SK-N-SH (cell line): ENCODE measurements at regions of chr5 and their contacts with region 1.

Region 1: GRCh38 chr5:170420780-170421412 is 31.7 kb upstream of the KCNMB1 start:
- DNase-seq: peak; percentile 77
- H3K4me3 ChIP-seq: no peak overlapping the region
- H3K27ac ChIP-seq: no peak overlapping the region
- H3K4me1 ChIP-seq: peaks cover 0 to 9% of the 10 kb centered on the region in 2 experiments; a peak in 1 of 4 replicates
- H3K27me3 ChIP-seq: peaks cover 20% of the 10 kb centered on the region
- CTCF ChIP-seq: peak; percentile 84
- EP300 ChIP-seq: no peak
- RAD21 ChIP-seq: peak; percentile 79

Region 2: DNA sequence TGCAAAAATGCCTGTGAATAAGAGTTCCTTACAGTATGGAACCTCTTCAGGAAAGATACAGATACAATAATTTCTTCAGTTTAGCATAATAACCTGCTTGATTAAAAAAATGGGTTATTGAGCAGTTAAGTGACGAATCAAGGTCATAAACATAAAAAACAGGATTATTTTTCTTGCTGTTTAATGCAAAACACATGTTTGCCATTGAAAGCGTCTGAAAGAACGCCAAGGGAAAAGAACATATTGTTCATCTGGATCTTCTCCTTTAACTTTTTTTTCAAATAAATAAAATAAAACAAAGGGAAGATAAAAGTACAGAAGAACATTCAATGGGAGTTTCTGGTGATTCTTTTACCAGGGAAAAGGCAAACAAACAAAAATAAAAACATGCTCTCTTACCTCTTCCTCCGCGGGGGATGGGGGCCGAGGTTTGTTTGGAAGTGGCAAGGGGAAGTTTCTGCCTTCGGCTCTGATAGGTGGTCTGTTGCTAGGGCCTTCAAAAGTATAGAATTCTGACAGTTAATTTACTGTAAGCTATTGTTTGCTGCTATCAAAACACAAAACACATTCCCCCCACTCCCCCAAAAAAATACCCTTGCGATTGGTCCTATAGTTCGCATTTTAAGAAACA is 168.1 kb before region 1 on chr5:
- CTCF ChIA-PET with region 1: interaction called, 12 read pairs
- POLR2A ChIA-PET with region 1: no interaction called
- DNase-seq: peak; percentile 46
- H3K4me3 ChIP-seq: no peak overlapping the region
- H3K27ac ChIP-seq: peak overlapping the region in 1 of 2 experiments; percentile 55; a peak in 1 of 4 replicates
- H3K4me1 ChIP-seq: peaks cover 0 to 10% of the 10 kb centered on the region in 2 experiments; a peak in 2 of 4 replicates
- H3K27me3 ChIP-seq: peaks cover 10% of the 10 kb centered on the region; the same call in 1 of the 2 replicates
- CTCF ChIP-seq: no peak
- EP300 ChIP-seq: no peak
- RAD21 ChIP-seq: no peak

Region 3: GRCh38 chr5:170262061-170263045 is 158.5 kb before region 1 on chr5:
- CTCF ChIA-PET with region 1: interaction called, 70 read pairs
- POLR2A ChIA-PET with region 1: no interaction called
- DNase-seq: no peak
- H3K4me3 ChIP-seq: no peak overlapping the region
- H3K27ac ChIP-seq: no peak overlapping the region
- H3K4me1 ChIP-seq: no peaks in the 10 kb centered on the region
- H3K27me3 ChIP-seq: peaks cover 6% of the 10 kb centered on the region
- CTCF ChIP-seq: no peak
- EP300 ChIP-seq: no peak
- RAD21 ChIP-seq: no peak

Region 4: GRCh38 chr5:170278611-170279452 is 142.1 kb before region 1 on chr5:
- CTCF ChIA-PET with region 1: interaction called, 35 read pairs
- POLR2A ChIA-PET with region 1: no interaction called
- DNase-seq: no peak
- H3K4me3 ChIP-seq: no peak overlapping the region
- H3K27ac ChIP-seq: no peak overlapping the region
- H3K4me1 ChIP-seq: peaks cover 0 to 11% of the 10 kb centered on the region in 2 experiments; a peak in 1 of 4 replicates
- H3K27me3 ChIP-seq: no peaks in the 10 kb centered on the region
- CTCF ChIP-seq: no peak
- EP300 ChIP-seq: no peak
- RAD21 ChIP-seq: no peak